CD8-positive, alpha-beta T cell (primary cell): ENCODE measurements at regions of chr15 and their contacts with region 1.

Region 1: DNA sequence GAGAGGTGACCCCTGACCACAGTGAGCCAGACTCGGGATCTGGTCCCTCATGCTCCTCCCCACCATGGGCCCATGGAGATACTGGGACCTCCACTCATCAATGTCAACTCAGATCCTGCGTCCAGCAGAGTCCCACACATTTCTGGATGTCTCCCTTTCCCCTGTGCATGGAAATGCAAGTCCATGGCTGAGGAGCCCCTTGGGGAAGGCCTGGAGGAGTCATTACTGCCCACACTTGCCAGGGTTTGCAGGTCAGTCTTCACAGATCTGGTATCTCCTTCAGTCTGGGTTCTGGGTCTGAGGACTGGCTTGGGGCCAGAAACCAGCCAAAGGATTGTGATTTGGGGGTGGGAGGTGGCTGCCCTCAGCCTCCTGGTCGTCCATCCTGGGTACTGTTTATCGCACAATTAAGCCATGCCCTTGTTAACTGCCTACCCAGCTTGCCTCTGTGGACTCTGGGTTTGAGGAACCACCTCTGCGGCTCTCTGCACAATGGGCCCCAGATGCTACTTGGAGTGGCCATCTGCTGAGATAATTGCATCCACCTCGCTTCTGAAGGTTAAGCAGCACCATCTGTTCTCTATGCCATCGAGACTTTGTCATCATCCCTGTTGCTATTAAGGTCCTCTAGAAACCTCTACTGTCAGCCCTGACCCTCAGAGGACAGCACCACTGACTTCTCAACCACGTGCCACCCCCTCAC is 49.9 kb upstream of the KLF13 start:
- DNase-seq: peak in 1 of 9 experiments; percentile 7
- ATAC-seq: no peak
- H3K4me3 ChIP-seq: no peak overlapping the region
- H3K4me3 Mint-ChIP-seq: no peak overlapping the region
- H3K27ac ChIP-seq: no peak overlapping the region
- H3K27ac Mint-ChIP-seq: no peak overlapping the region
- H3K4me1 ChIP-seq: no peaks in the 10 kb centered on the region
- H3K4me1 Mint-ChIP-seq: peaks cover 21% of the 10 kb centered on the region
- H3K27me3 ChIP-seq: no peaks in the 10 kb centered on the region
- H3K27me3 Mint-ChIP-seq: no peaks in the 10 kb centered on the region
- CTCF ChIP-seq: no peak

Region 2: DNA sequence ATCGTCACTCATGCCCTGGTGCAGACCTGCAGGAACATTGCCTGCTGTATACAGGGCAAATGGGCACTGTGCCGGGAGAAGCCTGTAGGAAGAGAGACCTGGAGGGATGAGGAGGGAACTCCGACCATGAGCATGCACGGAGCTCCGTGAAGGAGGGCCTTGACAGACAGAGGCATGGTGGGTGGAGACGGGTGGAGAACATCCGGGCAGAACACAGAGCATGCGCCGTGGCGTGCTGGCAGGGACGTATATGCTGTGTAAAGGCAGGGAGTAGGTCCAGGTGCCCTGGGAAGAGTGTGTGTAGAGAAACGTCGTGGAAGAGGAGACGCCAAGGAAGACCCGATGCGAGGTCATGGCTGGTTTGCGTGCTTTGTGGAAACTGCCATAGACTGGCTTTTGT is 506.0 kb before region 1 on chr15:
- CTCF ChIA-PET with region 1: no interaction called
- POLR2A ChIA-PET with region 1: no interaction called
- intact Hi-C with region 1: no loop called
- DNase-seq: no peak
- ATAC-seq: no peak
- H3K4me3 ChIP-seq: no peak overlapping the region
- H3K4me3 Mint-ChIP-seq: no peak overlapping the region
- H3K27ac ChIP-seq: no peak overlapping the region
- H3K27ac Mint-ChIP-seq: no peak overlapping the region
- H3K4me1 ChIP-seq: no peaks in the 10 kb centered on the region
- H3K4me1 Mint-ChIP-seq: peaks cover 3% of the 10 kb centered on the region
- H3K27me3 ChIP-seq: no peaks in the 10 kb centered on the region
- H3K27me3 Mint-ChIP-seq: no peaks in the 10 kb centered on the region
- CTCF ChIP-seq: no peak

Region 3: DNA sequence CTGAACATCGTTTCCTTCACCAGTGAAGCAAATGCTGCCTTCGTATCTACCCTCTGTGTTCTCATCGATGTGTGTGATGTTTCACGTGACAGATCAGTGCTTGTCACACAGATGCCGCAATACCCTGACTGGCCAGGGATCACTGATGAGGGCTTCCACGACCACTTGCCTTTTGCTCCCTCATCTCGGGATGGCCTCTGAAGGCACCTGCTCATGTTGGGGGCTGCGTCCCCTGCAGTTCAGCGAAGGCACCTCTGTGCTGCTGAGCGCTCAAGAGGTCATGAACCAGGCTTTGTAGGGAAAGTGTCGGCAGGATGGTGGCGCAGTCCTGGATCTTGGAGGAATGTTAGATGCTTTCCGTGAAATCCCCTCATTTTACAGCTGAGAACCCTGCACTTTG is 29.3 kb before region 1 on chr15:
- CTCF ChIA-PET with region 1: no interaction called
- POLR2A ChIA-PET with region 1: no interaction called
- intact Hi-C with region 1: loop called in 1 of 2 experiments (anchors 2 kb)
- DNase-seq: no peak
- ATAC-seq: no peak
- H3K4me3 ChIP-seq: no peak overlapping the region
- H3K4me3 Mint-ChIP-seq: no peak overlapping the region
- H3K27ac ChIP-seq: no peak overlapping the region
- H3K27ac Mint-ChIP-seq: no peak overlapping the region
- H3K4me1 ChIP-seq: no peaks in the 10 kb centered on the region
- H3K4me1 Mint-ChIP-seq: peaks cover 4% of the 10 kb centered on the region
- H3K27me3 ChIP-seq: no peaks in the 10 kb centered on the region
- H3K27me3 Mint-ChIP-seq: no peaks in the 10 kb centered on the region
- CTCF ChIP-seq: no peak

Region 4: GRCh38 chr15:31365655-31366127 is 88.9 kb after region 1 on chr15:
- CTCF ChIA-PET with region 1: no interaction called
- POLR2A ChIA-PET with region 1: no interaction called
- intact Hi-C with region 1: no loop called
- DNase-seq: peak; percentile 59 to 92 (median 84)
- ATAC-seq: peak; percentile 47
- H3K4me3 ChIP-seq: peak overlapping the region; percentile 32 to 59
- H3K4me3 Mint-ChIP-seq: peak overlapping the region; percentile 81
- H3K27ac ChIP-seq: peak overlapping the region; percentile 68 to 93
- H3K27ac Mint-ChIP-seq: peak overlapping the region; percentile 97
- H3K4me1 ChIP-seq: peaks cover 97% of the 10 kb centered on the region
- H3K4me1 Mint-ChIP-seq: peaks cover 96% of the 10 kb centered on the region
- H3K27me3 ChIP-seq: no peaks in the 10 kb centered on the region
- H3K27me3 Mint-ChIP-seq: no peaks in the 10 kb centered on the region
- CTCF ChIP-seq: peak; percentile 57